ENCODE measurements at regions of chr12 and their contacts with region 1.

Region 1: DNA sequence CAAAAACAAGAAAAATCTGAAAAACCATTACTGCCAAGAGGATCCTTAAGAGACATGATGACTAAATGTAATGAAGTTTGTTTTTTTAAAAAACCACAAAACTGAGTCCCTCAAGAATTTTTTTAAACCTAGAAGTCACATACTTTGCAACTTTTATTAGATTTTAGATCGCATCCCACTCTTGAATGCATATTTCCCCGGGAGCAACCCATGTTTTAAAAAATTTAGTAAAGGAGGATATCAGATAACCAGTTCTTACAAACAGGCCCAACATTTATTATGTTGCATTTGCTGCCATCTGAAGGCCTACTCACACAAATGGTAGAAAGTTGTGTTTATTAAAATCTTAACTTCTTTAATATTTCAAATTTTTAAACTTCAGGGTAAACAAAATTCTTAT is 44.3 kb upstream of the CCT2 start:
- DNase-seq: peak; percentile 41
- ATAC-seq: peak; percentile 52
- H3K4me3 ChIP-seq: no peak overlapping the region
- H3K27ac ChIP-seq: no peak overlapping the region
- H3K4me1 ChIP-seq: peaks cover 19% of the 10 kb centered on the region; the same call in 1 of the 2 replicates
- H3K27me3 ChIP-seq: no peaks in the 10 kb centered on the region
- CTCF ChIP-seq: peak; percentile 40; the same call in 1 of the 2 replicates

Region 2: GRCh38 chr12:69470189-69471075 is 70.6 kb before region 1 on chr12 and contains the start of gene FRS2:
- CTCF ChIA-PET with region 1: no interaction called
- POLR2A ChIA-PET with region 1: no interaction called
- intact Hi-C with region 1: loop called (anchors 2 kb)
- DNase-seq: peak; percentile 88
- ATAC-seq: peak; percentile 95
- H3K4me3 ChIP-seq: peak within 1 kb of the TSS; percentile 90
- H3K27ac ChIP-seq: peak within 1 kb of the TSS; percentile 43
- H3K4me1 ChIP-seq: peaks cover 11% of the 10 kb centered on the region; the same call in 1 of the 2 replicates
- H3K27me3 ChIP-seq: no peaks in the 10 kb centered on the region
- CTCF ChIP-seq: peak; percentile 61
- total RNA-seq, gene FRS2: 17.6 and 35.0 TPM in 2 replicates

Measured in PC-3 (cell line).